Spleen (tissue), 13 donors: ENCODE measurements at regions of chr11 and their contacts with region 1.

Region 1: DNA sequence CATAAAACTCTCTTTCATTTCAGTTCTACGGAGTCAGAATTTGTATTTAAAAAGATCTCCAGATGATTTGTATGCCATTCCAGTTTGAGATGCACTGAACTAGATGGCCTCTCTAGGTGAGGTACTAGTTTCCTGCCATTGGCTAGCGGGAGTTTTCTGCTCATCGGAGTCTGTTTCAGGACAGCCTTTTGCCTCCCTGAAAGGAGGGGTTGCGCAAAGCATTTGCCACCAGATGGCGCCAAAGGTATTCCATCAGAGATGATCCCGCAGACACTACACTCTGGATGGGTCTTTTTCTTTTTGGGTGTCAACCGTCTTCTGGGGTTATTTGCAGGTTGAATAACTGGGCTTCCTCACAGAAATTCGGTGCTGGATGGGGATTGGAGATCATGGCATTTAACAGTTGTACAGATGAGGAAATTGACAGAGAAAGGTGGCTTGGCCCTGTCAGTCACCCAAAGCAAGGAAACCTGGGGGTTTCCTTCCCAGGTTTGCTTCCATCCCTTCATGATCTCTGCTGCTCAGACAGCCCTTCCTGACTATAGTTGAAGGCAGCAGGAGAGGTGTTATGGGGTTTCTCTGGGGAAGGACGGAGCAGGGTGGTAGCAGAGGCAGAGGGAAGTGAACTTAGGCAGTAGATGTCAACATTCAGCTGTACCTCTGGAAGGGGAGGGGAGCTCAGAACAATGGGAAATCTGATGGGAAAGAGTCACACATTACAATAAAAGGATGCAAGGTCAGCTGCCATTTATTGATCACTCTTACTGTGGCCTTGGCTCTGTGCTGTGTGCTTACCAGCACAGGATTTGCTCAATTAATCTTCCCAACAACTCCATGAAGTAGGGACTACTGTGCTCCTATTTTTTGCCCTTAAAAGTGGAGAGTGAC is 81.6 kb downstream of the CCDC81 start:
- DNase-seq: peak; percentile 87
- H3K4me3 ChIP-seq: no peak overlapping the region
- H3K27ac ChIP-seq: peak overlapping the region in 5 of 8 donors; percentile 10 to 63 (median 28)
- H3K4me1 ChIP-seq: peaks cover 0 to 26% (median 15%) of the 10 kb centered on the region in 6 donors
- H3K27me3 ChIP-seq: no peaks in the 10 kb centered on the region
- CTCF ChIP-seq: peak; percentile 72 to 92 (median 88)
- POLR2A ChIP-seq: no peak

Region 2: DNA sequence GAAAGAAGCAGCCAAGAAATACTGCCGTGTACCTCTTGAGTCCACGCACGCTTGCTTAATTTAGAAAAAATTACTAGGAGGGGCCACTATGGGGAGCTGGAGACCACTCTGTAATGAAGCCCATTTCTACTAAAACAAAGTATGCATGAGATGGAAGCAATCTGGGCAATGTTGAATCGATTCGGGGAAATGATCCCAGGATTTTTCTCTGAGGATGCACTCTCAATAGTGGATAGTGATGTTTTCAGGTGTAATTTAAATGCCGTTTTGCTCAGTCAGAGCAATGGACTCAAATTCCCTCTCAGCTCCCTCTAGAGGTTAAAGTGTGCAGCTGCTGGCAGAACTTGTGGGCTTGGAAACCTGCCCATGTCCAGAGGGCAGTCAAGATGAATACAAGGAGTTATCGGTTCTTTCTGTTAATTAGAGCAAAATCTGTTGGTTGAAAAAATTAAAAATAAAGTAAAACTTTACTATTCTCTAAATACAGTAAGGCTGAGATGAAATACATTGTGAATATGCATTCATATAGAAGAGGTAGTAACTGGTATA is 152.0 kb after region 1 on chr11:
- intact Hi-C with region 1: loop called (anchors 10 kb)
- DNase-seq: no peak
- H3K4me3 ChIP-seq: peak overlapping the region in 1 of 8 donors; percentile 45
- H3K27ac ChIP-seq: no peak overlapping the region
- H3K4me1 ChIP-seq: peaks cover 0 to 23% (median 17%) of the 10 kb centered on the region in 6 donors
- H3K27me3 ChIP-seq: no peaks in the 10 kb centered on the region
- CTCF ChIP-seq: peak; percentile 37 to 91 (median 76)
- POLR2A ChIP-seq: no peak

Region 3: DNA sequence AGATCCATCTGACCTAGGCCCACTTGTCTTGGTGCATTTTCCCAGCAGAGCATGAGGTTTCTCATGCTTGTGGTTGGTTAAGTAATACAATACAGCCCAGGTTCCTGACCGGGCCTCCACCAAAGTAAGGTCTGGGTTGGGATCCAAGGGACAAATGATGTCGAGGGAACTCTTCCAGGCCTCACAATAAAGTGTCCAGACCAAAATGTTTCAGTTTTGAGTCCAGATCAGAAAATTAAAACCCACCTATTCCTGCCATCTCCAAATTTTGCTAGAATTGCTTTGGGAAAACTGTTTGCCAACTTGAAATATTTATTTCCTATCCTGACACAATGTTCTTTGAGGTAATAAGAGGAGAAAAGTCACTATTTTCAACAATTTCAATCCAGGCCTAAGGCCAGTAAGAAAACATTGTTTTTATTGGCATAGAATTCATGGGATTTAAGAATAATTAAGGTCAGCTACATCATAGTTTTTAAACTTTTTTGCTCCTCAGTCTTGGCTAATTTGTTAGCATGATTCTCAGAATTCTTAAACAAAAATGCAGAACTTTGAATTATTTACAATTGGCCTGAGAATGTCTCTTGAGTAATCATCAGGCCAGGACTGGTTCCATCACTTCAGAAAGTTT is 164.7 kb after region 1 on chr11:
- intact Hi-C with region 1: no loop called
- DNase-seq: no peak
- H3K4me3 ChIP-seq: no peak overlapping the region
- H3K27ac ChIP-seq: no peak overlapping the region
- H3K4me1 ChIP-seq: no peaks in the 10 kb centered on the region
- H3K27me3 ChIP-seq: no peaks in the 10 kb centered on the region
- CTCF ChIP-seq: no peak
- POLR2A ChIP-seq: no peak

Region 4: GRCh38 chr11:86818466-86819192 is 362.3 kb after region 1 on chr11:
- intact Hi-C with region 1: loop called (anchors 5 kb)
- DNase-seq: no peak
- H3K4me3 ChIP-seq: no peak overlapping the region
- H3K27ac ChIP-seq: peak overlapping the region in 1 of 8 donors; percentile 12
- H3K4me1 ChIP-seq: peaks cover 0 to 26% (median 11%) of the 10 kb centered on the region in 6 donors
- H3K27me3 ChIP-seq: no peaks in the 10 kb centered on the region
- CTCF ChIP-seq: peak; percentile 29 to 80 (median 73)
- POLR2A ChIP-seq: no peak

Region 5: DNA sequence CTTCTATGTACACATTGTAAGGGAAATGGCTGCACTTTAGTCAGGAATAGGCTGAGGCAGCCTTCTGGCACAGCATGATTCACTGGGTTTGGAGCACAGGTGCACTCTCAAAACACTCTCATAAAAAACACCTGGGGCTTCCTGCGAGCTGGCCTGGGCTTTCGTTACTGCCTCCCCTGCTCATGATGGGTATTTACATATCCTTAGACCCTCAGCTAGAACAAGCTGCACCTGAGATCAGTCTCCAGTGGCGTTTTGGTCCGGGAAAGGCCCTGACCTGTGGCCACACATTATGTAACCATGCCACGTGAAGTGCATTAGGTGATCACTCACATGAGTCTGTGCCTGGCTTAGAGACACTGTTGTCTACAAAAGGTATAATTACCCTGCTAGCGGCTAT is 903.1 kb after region 1 on chr11:
- intact Hi-C with region 1: no loop called
- DNase-seq: no peak
- H3K4me3 ChIP-seq: no peak overlapping the region
- H3K27ac ChIP-seq: no peak overlapping the region
- H3K4me1 ChIP-seq: peaks cover 0 to 10% (median 2%) of the 10 kb centered on the region in 6 donors
- H3K27me3 ChIP-seq: no peaks in the 10 kb centered on the region
- CTCF ChIP-seq: no peak
- POLR2A ChIP-seq: no peak